Activated B cell treated with CpG ODN at 0.5 μM for 24 hours (primary cell): ENCODE measurements at regions of chr6 and their contacts with region 1.

Region 1: DNA sequence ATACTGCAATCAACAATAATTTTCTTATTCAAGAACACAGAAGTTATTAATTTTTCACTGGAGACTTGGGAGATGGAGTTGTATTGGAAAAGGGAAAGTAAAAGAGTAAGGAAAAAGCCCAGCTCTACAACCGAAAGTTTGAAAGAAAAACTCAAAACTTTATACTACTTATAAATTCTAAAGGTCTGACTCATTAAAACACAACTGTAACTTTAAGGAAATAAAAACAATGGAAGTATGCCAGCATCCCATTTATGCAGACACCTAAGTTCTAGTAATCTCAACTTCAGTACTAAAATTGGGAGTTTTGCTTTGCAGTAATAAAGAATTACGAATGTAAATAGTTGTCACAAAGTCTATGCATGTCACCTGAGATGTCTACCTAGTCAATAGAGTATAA is 80.6 kb downstream of the IRAK1BP1 start:
- DNase-seq: no peak
- ATAC-seq: no peak
- H3K4me3 Mint-ChIP-seq: no peak overlapping the region
- H3K27ac Mint-ChIP-seq: no peak overlapping the region
- H3K4me1 Mint-ChIP-seq: no peaks in the 10 kb centered on the region
- H3K27me3 Mint-ChIP-seq: no peaks in the 10 kb centered on the region
- CTCF ChIP-seq: no peak

Region 2: DNA sequence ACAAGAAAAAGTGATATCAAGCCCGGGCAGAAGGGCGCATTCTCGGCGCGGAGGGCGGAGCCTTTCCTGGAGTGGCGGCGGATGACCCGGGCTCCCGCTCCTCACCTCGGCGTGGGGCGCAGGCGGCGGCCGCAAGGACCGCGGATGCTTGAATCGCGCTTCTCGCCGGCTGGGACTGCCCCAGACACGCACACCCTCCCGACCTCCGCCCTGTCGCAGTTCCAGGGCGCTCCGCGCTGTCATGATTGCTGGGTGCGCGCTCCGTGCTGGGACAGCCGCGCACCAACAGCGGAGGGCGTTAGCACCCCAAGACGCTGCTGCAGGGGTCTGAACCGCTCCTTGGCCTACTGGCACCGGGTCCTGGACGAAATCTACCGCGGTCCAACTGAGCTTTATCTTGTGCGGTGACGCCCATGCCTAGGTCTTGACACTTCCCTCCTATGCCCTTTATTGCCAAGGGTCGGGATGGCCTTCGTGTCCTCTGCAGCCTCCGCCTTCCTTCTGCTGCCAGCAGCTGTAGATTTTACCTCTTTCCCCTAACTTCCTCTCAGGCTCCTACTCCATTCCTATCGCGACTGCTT is 37.3 kb before region 1 on chr6:
- CTCF ChIA-PET with region 1: no interaction called
- POLR2A ChIA-PET with region 1: no interaction called
- intact Hi-C with region 1: no loop called
- DNase-seq: no peak
- ATAC-seq: no peak
- H3K4me3 Mint-ChIP-seq: peak overlapping the region; percentile 32
- H3K27ac Mint-ChIP-seq: no peak overlapping the region
- H3K4me1 Mint-ChIP-seq: peaks cover 16% of the 10 kb centered on the region
- H3K27me3 Mint-ChIP-seq: peaks cover 24% of the 10 kb centered on the region
- CTCF ChIP-seq: no peak

Region 3: GRCh38 chr6:79504372-79504771 is 556.4 kb after region 1 on chr6:
- CTCF ChIA-PET with region 1: no interaction called
- POLR2A ChIA-PET with region 1: interaction called, 11 read pairs
- intact Hi-C with region 1: no loop called
- DNase-seq: no peak
- ATAC-seq: no peak
- H3K4me3 Mint-ChIP-seq: no peak overlapping the region
- H3K27ac Mint-ChIP-seq: no peak overlapping the region
- H3K4me1 Mint-ChIP-seq: no peaks in the 10 kb centered on the region
- H3K27me3 Mint-ChIP-seq: no peaks in the 10 kb centered on the region
- CTCF ChIP-seq: no peak